ENCODE measurements at regions of chrX and their contacts with region 1.

Region 1: GRCh38 chrX:2751291-2751690 is 549 bp upstream of the XG start:
- DNase-seq: no peak
- H3K4me3 ChIP-seq: no peak overlapping the region
- H3K27ac ChIP-seq: no peak overlapping the region
- H3K4me1 ChIP-seq: peaks cover 6% of the 10 kb centered on the region
- H3K27me3 ChIP-seq: no peaks in the 10 kb centered on the region
- CTCF ChIP-seq: no peak
- POLR2A ChIP-seq: no peak

Region 2: DNA sequence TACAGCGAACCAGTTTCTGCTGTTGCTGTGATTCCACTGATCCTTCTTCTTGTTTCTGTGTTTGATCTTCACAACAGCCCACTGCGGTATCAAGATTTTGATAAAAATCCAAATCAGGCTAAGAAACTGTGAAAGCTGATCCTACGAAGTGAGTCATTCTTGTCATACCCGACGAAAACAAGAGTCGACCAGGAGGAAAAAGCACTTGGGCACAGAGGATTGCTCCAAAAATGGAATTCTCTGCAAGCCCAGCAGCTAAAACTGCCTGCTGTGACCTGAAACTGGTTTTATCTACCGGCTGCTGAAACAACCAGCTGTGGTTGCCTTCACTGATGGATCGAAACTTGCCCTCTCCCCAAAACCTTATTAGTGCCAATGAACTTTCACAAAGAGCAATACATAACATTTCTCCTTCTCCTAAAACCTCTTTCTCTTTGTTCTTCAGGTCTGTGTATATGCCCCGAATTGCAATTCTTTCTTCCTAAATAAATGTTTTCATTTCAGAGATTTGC is 1569.2 kb after region 1 on chrX:
- intact Hi-C with region 1: loop called (anchors 10 kb)
- DNase-seq: no peak
- H3K4me3 ChIP-seq: no peak overlapping the region
- H3K27ac ChIP-seq: no peak overlapping the region
- H3K4me1 ChIP-seq: no peaks in the 10 kb centered on the region
- H3K27me3 ChIP-seq: no peaks in the 10 kb centered on the region
- CTCF ChIP-seq: no peak
- POLR2A ChIP-seq: no peak

Measured in vagina (tissue), 2 donors.